Left ventricle myocardium superior (tissue), 1 donor: ENCODE measurements at regions of chr15 and their contacts with region 1.

Region 1: DNA sequence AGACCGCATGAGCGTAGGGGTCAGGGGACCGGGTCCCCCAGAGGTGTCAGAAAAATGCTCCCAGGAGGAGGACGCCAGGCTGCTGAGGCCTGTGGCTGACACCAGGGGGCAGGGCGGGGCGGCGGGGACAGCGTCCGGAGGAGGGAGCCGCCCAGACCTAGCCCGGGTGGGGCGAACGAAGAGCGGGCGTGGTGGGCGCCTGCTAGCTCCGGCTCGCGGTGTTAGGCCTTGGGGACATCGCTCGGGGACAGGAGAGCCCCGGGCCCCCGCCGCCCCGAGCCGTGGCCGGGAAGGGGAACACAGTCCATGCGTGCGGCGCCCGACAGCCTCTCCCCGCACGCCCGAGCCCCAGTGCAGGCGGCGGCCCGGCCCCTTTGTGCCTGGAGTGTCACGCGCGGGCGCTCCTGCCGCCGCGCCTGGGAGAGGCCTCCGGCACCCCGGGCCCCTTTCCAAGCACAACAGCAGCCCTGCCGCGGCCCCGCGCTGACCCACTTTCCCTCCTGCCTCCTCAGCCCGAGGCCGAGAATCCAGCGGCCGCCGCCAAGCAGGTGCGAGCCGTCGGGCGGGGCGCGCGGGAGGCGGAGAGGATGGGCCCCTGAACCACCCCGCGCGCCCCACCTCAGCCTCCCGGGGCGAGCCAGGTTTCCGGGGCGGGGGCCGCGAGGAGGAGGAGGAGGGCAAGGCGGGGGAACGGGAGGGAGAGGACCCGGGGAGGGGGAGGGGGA is 111.0 kb upstream of the KLF13 start:
- DNase-seq: peak; percentile 93
- ATAC-seq: peak; percentile 87

Region 2: DNA sequence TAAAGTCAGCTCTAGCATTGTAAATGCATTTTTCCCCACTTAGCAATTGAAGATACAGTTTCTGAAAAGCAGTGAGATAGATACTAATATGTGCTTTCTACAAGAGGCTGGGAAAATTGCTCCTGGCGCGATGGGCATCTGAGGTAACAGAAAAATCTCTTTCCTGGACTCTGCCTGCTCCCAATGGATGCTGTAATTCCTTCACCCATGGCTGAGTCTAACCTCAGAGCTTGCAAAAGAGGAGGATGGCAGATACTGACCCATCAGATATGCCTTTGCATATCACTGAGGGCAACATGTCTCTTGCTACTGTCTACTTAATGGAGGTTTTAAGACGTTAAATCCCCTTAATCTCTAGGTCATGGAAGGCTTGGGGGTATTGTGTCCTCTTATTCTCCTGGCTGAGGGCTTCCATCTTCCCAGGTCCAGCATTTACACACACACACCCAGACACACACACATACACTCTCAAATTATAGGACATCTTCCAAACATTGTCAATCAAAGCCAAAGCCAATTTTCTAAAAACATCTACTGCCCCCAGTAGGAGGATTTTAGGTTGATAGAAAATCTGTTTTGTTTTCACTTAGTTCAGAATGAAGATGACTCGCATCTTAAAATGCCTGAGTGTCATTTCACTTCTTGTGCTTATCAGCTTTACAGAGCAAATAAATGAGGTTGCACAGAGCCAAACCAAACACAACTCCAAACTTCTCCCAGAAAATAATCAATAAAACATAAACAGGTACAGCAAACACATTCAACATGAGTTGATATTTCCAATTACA is 116.5 kb before region 1 on chr15:
- intact Hi-C with region 1: no loop called
- DNase-seq: no peak
- ATAC-seq: no peak

Region 3: GRCh38 chr15:31116423-31117030 is 99.1 kb before region 1 on chr15:
- intact Hi-C with region 1: no loop called
- DNase-seq: no peak
- ATAC-seq: no peak

Region 4: GRCh38 chr15:31326156-31326732 is 110.6 kb after region 1 on chr15:
- intact Hi-C with region 1: loop called (anchors 5 kb)
- DNase-seq: peak; percentile 100
- ATAC-seq: peak; percentile 85

Region 5: GRCh38 chr15:31488426-31489204 is 273.0 kb after region 1 on chr15:
- intact Hi-C with region 1: loop called (anchors 5 kb)
- DNase-seq: peak; percentile 60
- ATAC-seq: peak; percentile 82